Naive thymus-derived CD4-positive, alpha-beta T cell (primary cell): ENCODE measurements at regions of chr4 and their contacts with region 1.

Region 1: DNA sequence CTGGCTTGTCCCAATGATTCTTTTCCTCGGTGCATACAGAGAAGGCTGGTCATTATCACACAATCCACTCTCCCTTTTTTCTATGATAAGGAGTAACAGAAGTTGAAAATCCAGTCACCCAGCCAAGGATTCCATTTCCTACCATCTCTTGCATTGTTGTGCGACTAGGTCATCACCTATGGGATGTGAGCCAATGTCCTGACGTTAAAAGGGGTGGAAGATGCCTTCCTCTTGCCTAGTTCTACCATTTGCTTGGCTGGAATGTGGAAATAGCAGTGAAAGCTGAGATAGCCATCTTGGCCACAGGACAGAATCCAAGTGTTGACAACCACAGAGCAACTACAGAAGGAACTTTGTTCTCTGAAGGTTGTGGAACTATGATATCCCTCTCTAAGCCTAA is 132.2 kb upstream of the KIT start:
- DNase-seq: no peak
- ATAC-seq: no peak
- H3K4me3 ChIP-seq: no peak overlapping the region
- H3K4me3 Mint-ChIP-seq: no peak overlapping the region
- H3K27ac ChIP-seq: no peak overlapping the region
- H3K27ac Mint-ChIP-seq: no peak overlapping the region
- H3K4me1 ChIP-seq: no peaks in the 10 kb centered on the region
- H3K4me1 Mint-ChIP-seq: no peaks in the 10 kb centered on the region
- H3K27me3 ChIP-seq: no peaks in the 10 kb centered on the region
- H3K27me3 Mint-ChIP-seq: peaks cover 0 to 10% (median 5%) of the 10 kb centered on the region in 5 donors

Region 2: DNA sequence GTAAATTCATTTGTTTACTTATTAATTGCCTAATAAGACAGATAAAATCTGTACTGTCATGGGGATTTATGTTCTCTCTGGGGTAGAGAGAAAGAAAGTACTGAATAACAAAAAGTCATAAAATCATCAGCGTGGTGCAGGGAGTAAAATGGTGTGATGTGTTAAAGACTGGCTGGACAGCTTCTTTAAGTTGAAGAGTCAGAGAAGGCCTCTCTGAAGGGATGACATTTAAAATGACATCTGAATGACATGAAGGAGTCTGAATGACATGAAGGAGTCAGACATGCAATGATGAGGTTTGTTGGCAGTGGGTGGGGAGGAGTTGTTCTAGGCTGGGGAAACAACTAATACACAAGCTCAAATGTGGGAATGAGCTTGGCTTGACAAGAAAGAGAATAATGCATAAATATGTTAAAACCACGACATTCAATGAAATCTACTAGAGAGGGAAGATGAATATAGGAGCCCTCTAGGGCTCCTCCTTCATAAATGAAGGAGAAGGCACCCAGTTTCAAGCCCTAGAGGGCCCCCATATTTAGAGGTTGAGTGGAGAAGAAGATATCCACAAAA is 68.2 kb after region 1 on chr4:
- CTCF ChIA-PET with region 1: no interaction called
- POLR2A ChIA-PET with region 1: no interaction called
- intact Hi-C with region 1: loop called in 1 of 2 experiments (anchors 5 kb)
- DNase-seq: no peak
- ATAC-seq: no peak
- H3K4me3 ChIP-seq: no peak overlapping the region
- H3K4me3 Mint-ChIP-seq: no peak overlapping the region
- H3K27ac ChIP-seq: no peak overlapping the region
- H3K27ac Mint-ChIP-seq: no peak overlapping the region
- H3K4me1 ChIP-seq: no peaks in the 10 kb centered on the region
- H3K4me1 Mint-ChIP-seq: no peaks in the 10 kb centered on the region
- H3K27me3 ChIP-seq: no peaks in the 10 kb centered on the region
- H3K27me3 Mint-ChIP-seq: peaks cover 0 to 15% (median 2%) of the 10 kb centered on the region in 5 donors